ENCODE measurements at regions of chr7 and their contacts with region 1.

Region 1: DNA sequence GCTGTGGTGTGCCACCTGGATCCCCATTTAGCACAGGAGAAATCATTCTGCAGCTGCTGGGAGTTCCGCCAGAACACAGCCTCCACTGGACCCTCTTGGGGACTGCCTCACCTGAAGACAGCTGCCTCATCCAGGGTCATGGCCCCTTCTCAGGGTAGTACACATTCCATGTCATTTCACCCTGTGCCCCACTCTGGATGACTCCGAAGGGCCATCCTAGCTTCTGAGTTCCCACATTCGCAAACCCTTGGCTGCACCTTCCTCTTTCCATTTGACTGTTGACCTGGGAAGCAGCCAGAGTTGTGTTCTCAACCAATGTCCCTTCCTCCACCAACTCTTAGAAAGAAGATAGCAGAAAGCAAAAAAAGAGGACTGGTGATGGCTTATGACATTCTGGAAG is 125.6 kb upstream of the TBX20 start:
- DNase-seq: no peak

Region 2: GRCh38 chr7:35253710-35254495 is 125.6 kb before region 1 on chr7 and contains the start of gene TBX20:
- intact Hi-C with region 1: loop called (anchors 5 kb)
- DNase-seq: no peak
- total RNA-seq, gene TBX20: 58.0 TPM

Region 3: GRCh38 chr7:35465791-35466336 is 86.4 kb after region 1 on chr7:
- intact Hi-C with region 1: loop called (anchors 2 kb)
- DNase-seq: peak; percentile 86

Region 4: DNA sequence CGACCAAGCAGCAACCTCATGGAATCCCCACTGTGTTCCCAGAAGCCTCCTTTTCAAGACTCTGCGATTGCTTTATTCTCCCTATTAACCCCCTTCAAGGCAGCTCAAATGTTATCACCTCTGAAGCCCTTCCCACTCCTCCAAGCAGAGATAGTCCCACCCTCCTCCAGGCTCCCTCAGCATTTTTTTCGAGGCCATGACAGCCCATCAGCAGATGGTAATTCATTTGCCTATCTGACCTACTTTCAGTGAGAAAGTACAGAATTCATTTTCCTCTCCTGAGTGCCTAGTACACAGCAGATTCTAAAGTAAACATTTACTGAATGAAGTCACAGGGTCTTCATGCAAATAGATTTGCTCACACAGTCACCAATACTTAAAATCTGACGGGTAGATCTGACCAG is 267.7 kb after region 1 on chr7:
- intact Hi-C with region 1: no loop called
- DNase-seq: no peak

Region 5: DNA sequence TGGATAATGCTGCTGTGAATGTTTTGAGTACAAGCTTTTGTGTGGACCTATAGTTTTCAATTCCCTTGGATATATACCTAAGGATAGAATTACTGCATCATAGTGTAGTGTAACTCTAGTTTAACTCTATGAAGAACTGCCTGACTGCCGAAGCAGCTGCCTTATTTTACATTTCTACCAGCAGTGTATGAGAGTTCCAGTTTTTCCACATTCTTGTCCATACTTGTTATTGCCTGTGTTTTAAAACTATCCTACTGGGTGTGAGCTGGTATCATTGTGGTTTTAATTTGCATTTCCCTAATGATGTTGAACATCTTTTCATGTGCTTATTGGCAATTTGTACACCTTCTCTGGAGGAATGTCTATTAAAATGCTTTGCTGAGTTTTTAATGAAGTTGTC is 437.0 kb after region 1 on chr7:
- intact Hi-C with region 1: no loop called
- DNase-seq: no peak